Activated CD4-positive, alpha-beta T cell treated with anti-CD3 and anti-CD28 coated beads, Interleukin-2, amount 10 ng/mL, durations not matched to agents 7 days and 5 days (primary cell): ENCODE measurements at regions of chr1 and their contacts with region 1.

Region 1: GRCh38 chr1:245041058-245041698 is 113.6 kb upstream of the KIF26B start:
- DNase-seq: no peak
- H3K4me3 Mint-ChIP-seq: no peak overlapping the region
- H3K27ac Mint-ChIP-seq: no peak overlapping the region
- H3K4me1 Mint-ChIP-seq: peaks cover 8% of the 10 kb centered on the region
- H3K27me3 Mint-ChIP-seq: no peaks in the 10 kb centered on the region

Region 2: GRCh38 chr1:244603498-244603897 is 437.7 kb before region 1 on chr1:
- CTCF ChIA-PET with region 1: interaction called, 10 read pairs
- POLR2A ChIA-PET with region 1: interaction called, 3 read pairs
- DNase-seq: peak; percentile 13
- H3K4me3 Mint-ChIP-seq: no peak overlapping the region
- H3K27ac Mint-ChIP-seq: no peak overlapping the region
- H3K4me1 Mint-ChIP-seq: peaks cover 9% of the 10 kb centered on the region
- H3K27me3 Mint-ChIP-seq: no peaks in the 10 kb centered on the region

Region 3: DNA sequence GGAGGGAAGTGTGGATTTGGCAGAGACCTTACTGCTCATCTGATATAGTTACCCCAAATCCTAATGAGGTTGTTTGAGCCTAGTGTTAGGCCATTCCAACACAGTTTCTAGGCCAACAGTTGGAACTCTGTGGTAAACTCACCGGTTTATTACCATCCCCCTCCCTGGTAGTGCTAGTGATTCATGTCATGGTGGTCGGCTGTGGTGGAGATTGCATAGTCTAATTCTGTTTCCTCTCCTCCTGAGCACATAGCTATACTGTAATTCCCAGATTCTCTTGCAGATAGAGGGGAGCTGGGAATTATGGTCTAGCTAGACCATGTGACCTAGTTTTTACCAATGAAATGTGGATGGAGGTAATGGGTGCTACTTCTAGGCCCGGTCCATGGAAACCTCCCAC is 10.1 kb before region 1 on chr1:
- CTCF ChIA-PET with region 1: interaction called, 10 read pairs
- POLR2A ChIA-PET with region 1: no interaction called
- DNase-seq: no peak
- H3K4me3 Mint-ChIP-seq: no peak overlapping the region
- H3K27ac Mint-ChIP-seq: no peak overlapping the region
- H3K4me1 Mint-ChIP-seq: peaks cover 14% of the 10 kb centered on the region
- H3K27me3 Mint-ChIP-seq: no peaks in the 10 kb centered on the region

Region 4: DNA sequence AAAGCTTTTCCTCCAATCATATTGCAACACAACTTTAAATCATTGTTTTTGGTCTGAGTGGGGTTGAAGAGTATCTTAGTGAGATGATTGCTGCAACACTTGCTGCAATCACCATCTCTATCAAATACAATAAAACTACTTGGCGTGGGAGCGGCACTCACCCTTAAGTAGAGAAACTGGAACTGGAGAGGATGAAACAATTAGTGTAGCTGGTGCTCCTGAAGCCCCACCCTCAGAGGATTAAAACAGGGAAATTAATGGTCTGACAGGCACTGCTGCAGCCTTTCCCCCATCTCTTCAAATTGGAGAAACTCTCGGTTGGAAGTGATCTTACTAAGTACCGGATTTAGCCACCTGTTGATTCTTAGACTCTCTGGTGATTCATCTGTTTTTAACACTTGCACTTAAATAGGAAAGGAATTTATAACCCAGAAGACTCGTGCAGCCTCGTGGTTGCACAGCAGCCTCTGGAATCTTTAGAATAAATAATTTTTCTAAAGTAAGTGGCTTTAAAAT is 33.1 kb after region 1 on chr1:
- CTCF ChIA-PET with region 1: no interaction called
- POLR2A ChIA-PET with region 1: no interaction called
- DNase-seq: no peak
- H3K4me3 Mint-ChIP-seq: no peak overlapping the region
- H3K27ac Mint-ChIP-seq: no peak overlapping the region
- H3K4me1 Mint-ChIP-seq: no peaks in the 10 kb centered on the region
- H3K27me3 Mint-ChIP-seq: no peaks in the 10 kb centered on the region